PC-3 (cell line): ENCODE measurements at regions of chr10 and their contacts with region 1.

Region 1: DNA sequence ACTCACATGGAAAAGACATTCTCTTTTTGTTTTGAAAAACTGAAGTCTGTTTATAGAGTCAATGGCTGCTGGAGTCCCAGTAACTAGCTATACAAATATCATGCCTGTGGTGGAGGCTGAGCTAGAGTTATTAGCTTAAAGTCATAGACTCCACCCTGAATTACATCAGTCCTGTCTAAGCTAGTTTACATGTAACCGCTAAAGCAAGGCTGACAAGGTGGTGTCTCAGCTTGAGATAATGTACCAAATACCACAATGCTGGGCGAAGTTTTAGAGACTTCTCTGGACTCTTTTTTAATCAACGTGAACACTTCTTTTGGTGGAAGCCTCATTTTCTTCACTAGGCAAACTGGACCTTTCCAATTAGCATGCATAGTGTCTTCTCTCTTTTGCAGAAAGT is 219.4 kb downstream of the ANK3 start:
- DNase-seq: peak; percentile 97
- ATAC-seq: peak; percentile 72
- H3K4me3 ChIP-seq: peak overlapping the region; percentile 55
- H3K27ac ChIP-seq: peak overlapping the region; percentile 95
- H3K4me1 ChIP-seq: peaks cover 71% of the 10 kb centered on the region
- H3K27me3 ChIP-seq: no peaks in the 10 kb centered on the region
- CTCF ChIP-seq: no peak

Region 2: GRCh38 chr10:60123172-60124067 is 46.8 kb before region 1 on chr10:
- CTCF ChIA-PET with region 1: no interaction called
- POLR2A ChIA-PET with region 1: interaction called, 3 read pairs
- intact Hi-C with region 1: loop called (anchors 1 kb)
- DNase-seq: peak; percentile 99
- ATAC-seq: peak; percentile 99
- H3K4me3 ChIP-seq: peak overlapping the region; percentile 23
- H3K27ac ChIP-seq: peak overlapping the region; percentile 93
- H3K4me1 ChIP-seq: peaks cover 27% of the 10 kb centered on the region
- H3K27me3 ChIP-seq: no peaks in the 10 kb centered on the region
- CTCF ChIP-seq: no peak

Region 3: DNA sequence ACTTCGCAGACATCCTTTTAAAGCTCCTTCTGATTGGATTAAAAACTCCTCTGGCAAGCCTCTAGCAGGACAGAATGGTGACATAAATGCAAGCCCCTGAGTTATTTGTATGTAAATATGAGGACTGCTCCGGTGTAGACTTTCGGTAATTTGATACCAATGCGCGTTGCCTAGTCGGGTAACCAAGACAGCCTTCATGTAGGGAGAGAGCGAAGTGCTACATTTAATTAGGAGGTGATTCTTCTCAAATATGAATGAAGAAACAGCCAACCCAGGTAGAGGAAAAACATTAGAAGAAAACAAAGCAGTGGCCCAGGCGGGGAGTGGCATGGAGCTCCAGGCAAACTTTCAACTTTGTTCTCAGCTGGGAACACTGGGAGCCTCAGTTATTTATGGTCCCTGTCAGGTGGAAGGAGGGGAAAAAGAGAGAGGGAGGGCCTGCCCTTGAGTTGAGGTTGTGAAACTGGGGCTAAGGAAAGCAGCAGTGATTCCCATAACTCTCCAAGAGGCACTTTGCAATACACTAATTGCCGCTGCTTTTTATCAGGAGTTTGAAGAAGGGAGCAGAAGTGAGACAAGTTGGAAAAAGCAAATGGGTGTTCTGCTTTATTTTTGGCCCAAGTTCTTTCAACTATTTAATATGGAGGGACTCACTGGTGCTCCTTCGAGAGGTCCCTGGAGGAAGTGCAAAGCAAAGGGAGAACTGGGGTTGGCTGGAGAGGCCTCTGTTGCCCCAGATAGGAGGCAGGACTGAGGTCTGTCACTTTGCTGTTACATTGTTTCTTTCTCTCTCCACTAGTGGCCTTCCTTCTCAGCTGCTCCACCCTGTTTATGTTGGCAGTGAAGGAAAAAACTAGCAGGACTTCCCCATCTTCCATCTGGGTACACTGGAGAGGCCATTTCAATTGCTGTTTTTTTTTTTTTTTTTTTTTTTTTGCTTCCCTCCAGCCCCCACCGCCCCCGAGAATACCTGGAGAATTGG is 29.3 kb before region 1 on chr10:
- CTCF ChIA-PET with region 1: interaction called, 3 read pairs
- POLR2A ChIA-PET with region 1: no interaction called
- intact Hi-C with region 1: loop called (anchors 1 kb)
- DNase-seq: peak; percentile 81
- ATAC-seq: peak; percentile 81
- H3K4me3 ChIP-seq: peak overlapping the region; percentile 59
- H3K27ac ChIP-seq: peak overlapping the region; percentile 88
- H3K4me1 ChIP-seq: peaks cover 70% of the 10 kb centered on the region
- H3K27me3 ChIP-seq: no peaks in the 10 kb centered on the region
- CTCF ChIP-seq: 0 out of 2 replicates have a peak, but pooled peaks have one; percentile 7